T-cell (primary cell): ENCODE measurements at regions of chr4 and their contacts with region 1.

Region 1: GRCh38 chr4:159950707-159951106 is 847.8 kb downstream of the RAPGEF2 start:
- DNase-seq: no peak
- ATAC-seq: no peak
- H3K4me3 ChIP-seq: no peak overlapping the region
- H3K4me3 Mint-ChIP-seq: no peak overlapping the region
- H3K27ac ChIP-seq: no peak overlapping the region
- H3K27ac Mint-ChIP-seq: no peak overlapping the region
- H3K4me1 ChIP-seq: no peaks in the 10 kb centered on the region
- H3K4me1 Mint-ChIP-seq: no peaks in the 10 kb centered on the region
- H3K27me3 ChIP-seq: no peaks in the 10 kb centered on the region
- H3K27me3 Mint-ChIP-seq: no peaks in the 10 kb centered on the region

Region 2: DNA sequence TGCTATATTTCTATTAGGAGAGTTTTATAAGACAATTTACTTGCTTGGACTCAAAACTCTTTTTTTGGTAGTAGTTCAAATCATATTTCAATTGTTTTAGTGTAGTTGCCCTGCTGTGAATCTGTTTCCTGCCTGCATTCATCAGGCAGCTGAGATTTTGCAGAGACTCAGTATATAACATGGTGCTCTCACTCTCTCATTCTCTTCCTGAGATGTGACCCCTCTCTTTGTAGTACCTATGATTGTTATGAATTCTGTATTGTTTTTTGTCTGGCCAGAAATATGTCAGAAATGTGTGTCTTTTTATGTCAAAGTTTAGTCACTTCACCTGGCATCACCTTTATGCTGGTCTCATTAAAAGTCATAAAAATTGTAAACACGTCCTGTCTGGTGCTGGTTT is 473.8 kb before region 1 on chr4:
- CTCF ChIA-PET with region 1: no interaction called
- POLR2A ChIA-PET with region 1: interaction called in 1 of 2 experiments, 13 read pairs
- DNase-seq: no peak
- ATAC-seq: no peak
- H3K4me3 ChIP-seq: no peak overlapping the region
- H3K4me3 Mint-ChIP-seq: no peak overlapping the region
- H3K27ac ChIP-seq: no peak overlapping the region
- H3K27ac Mint-ChIP-seq: no peak overlapping the region
- H3K4me1 ChIP-seq: no peaks in the 10 kb centered on the region
- H3K4me1 Mint-ChIP-seq: no peaks in the 10 kb centered on the region
- H3K27me3 ChIP-seq: no peaks in the 10 kb centered on the region
- H3K27me3 Mint-ChIP-seq: peaks cover 4% of the 10 kb centered on the region in 2 donors

Region 3: GRCh38 chr4:159516556-159517140 is 434.1 kb before region 1 on chr4:
- CTCF ChIA-PET with region 1: no interaction called
- POLR2A ChIA-PET with region 1: no interaction called
- DNase-seq: no peak
- ATAC-seq: no peak
- H3K4me3 ChIP-seq: no peak overlapping the region
- H3K4me3 Mint-ChIP-seq: no peak overlapping the region
- H3K27ac ChIP-seq: no peak overlapping the region
- H3K27ac Mint-ChIP-seq: no peak overlapping the region
- H3K4me1 ChIP-seq: no peaks in the 10 kb centered on the region
- H3K4me1 Mint-ChIP-seq: no peaks in the 10 kb centered on the region
- H3K27me3 ChIP-seq: no peaks in the 10 kb centered on the region
- H3K27me3 Mint-ChIP-seq: no peaks in the 10 kb centered on the region

Region 4: DNA sequence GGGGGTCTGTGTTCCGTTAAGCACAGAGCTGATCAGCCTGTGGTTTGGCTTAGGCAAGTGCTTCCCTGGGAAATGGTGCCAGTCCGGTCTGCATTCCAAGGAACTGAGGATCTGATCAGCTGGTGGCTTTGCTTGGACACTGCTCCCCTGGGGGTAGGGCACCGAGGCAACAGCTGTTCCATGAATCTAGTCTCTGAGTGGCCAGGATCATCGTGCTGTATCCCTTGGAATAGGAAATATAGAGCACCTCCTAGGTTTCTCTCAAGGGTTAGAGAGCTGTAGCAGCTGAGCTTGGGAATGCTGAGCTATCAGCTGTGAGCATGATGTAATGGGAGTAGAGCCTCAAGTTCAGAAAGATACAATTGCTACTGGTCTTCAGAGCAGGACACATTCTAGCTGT is 16.0 kb after region 1 on chr4:
- CTCF ChIA-PET with region 1: no interaction called
- POLR2A ChIA-PET with region 1: no interaction called
- DNase-seq: no peak
- ATAC-seq: no peak
- H3K4me3 ChIP-seq: no peak overlapping the region
- H3K4me3 Mint-ChIP-seq: no peak overlapping the region
- H3K27ac ChIP-seq: no peak overlapping the region
- H3K27ac Mint-ChIP-seq: no peak overlapping the region
- H3K4me1 ChIP-seq: no peaks in the 10 kb centered on the region
- H3K4me1 Mint-ChIP-seq: no peaks in the 10 kb centered on the region
- H3K27me3 ChIP-seq: no peaks in the 10 kb centered on the region
- H3K27me3 Mint-ChIP-seq: no peaks in the 10 kb centered on the region